Dorsolateral prefrontal cortex (tissue), 120 donors: ENCODE measurements at regions of chr11 and their contacts with region 1.

Region 1: GRCh38 chr11:11777897-11778296 is 63.9 kb upstream of the USP47 start:
- DNase-seq: no peak
- H3K4me3 ChIP-seq: no peak overlapping the region
- H3K27ac ChIP-seq: no peak overlapping the region
- H3K27me3 ChIP-seq: no peaks in the 10 kb centered on the region
- CTCF ChIP-seq: no peak

Region 2: GRCh38 chr11:11641581-11641980 is 136.3 kb before region 1 on chr11:
- intact Hi-C with region 1: loop called in 1 of 2 experiments (anchors 10 kb)
- DNase-seq: no peak
- H3K4me3 ChIP-seq: no peak overlapping the region
- H3K27ac ChIP-seq: peak overlapping the region in 29 of 59 donors; percentile 0 to 81 (median 46)
- H3K27me3 ChIP-seq: no peaks in the 10 kb centered on the region
- CTCF ChIP-seq: no peak